ENCODE measurements at regions of chr1 and their contacts with region 1.

Region 1: DNA sequence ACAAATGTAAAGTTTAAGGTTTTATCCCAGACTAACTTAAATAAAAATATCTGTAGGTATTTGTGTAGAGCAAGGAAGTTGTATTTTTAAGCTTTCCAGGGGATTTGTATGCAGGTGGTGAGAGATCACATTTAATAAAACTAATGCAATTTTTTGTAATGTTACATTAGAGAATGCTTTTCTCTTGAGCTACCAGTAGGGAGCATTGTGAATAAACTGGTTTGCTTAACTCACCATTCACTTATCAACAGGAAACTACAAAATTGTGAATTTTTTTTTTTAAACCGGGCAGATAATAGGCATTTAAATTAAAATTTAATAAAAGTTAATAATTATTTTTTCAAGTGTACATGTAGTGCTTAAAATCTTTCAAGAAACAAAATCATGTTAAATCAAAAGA is 78.6 kb downstream of the IVNS1ABP start:
- DNase-seq: no peak
- ATAC-seq: no peak
- H3K4me3 ChIP-seq: no peak overlapping the region
- H3K27ac ChIP-seq: no peak overlapping the region
- H3K4me1 ChIP-seq: no peaks in the 10 kb centered on the region
- H3K27me3 ChIP-seq: no peaks in the 10 kb centered on the region

Region 2: GRCh38 chr1:184973272-184974055 is 265.0 kb before region 1 on chr1:
- intact Hi-C with region 1: no loop called
- DNase-seq: peak; percentile 50 to 81 (median 78)
- ATAC-seq: peak; percentile 58 to 66
- H3K4me3 ChIP-seq: peak overlapping the region; percentile 83
- H3K27ac ChIP-seq: peak overlapping the region; percentile 83
- H3K4me1 ChIP-seq: no peaks in the 10 kb centered on the region
- H3K27me3 ChIP-seq: no peaks in the 10 kb centered on the region

Region 3: GRCh38 chr1:185040408-185040735 is 198.1 kb before region 1 on chr1:
- intact Hi-C with region 1: no loop called
- DNase-seq: no peak
- ATAC-seq: no peak
- H3K4me3 ChIP-seq: no peak overlapping the region
- H3K27ac ChIP-seq: no peak overlapping the region
- H3K4me1 ChIP-seq: no peaks in the 10 kb centered on the region
- H3K27me3 ChIP-seq: no peaks in the 10 kb centered on the region

Region 4: DNA sequence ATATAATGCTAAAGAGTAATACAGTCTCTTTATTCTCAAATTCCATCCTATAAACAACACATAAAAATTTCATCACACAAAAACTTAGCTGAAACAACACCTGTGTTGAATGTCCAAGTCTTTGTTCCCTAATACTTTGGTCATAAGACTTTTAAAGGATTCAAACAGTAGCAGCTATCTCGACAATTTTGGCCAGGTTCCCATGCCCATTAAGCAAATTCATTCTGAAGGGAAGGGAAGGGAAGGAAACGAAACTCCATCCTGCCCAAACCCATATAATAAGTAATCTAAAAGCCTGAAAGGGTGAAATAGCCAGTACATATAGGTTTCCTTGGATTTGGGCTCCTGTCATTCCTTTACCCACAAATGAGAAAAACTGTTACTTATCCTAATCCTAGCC is 71.1 kb after region 1 on chr1:
- intact Hi-C with region 1: no loop called
- DNase-seq: no peak
- ATAC-seq: peak in 1 of 2 donors; percentile 33
- H3K4me3 ChIP-seq: no peak overlapping the region
- H3K27ac ChIP-seq: no peak overlapping the region
- H3K4me1 ChIP-seq: peaks cover 4% of the 10 kb centered on the region
- H3K27me3 ChIP-seq: no peaks in the 10 kb centered on the region

Region 5: DNA sequence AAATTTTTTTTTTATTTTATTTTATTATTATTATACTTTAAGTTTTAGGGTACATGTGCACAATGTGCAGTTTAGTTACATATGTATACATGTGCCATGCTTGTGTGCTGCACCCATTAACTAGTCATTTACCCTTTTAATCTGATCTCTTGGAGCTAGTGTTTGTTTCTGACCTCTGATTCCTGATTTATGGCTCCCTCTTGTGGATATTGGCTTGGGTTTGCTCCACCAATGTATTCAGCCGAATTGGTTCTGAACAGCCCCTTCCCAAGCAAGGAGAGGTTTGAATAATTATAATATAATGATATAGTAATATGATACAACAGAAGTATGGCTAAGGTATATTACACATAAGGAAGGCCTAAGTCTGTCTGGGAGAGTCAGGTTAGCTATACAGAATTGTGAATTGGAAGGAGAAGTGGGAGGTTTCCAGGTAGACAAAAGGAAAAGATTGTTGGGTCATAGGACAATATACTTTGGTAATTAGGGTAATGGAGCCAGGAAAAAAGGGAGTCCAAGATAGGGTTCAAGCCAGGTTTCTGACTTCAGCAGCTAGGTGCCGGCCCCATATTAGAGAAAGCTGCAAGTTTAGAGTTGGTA is 442.7 kb after region 1 on chr1:
- intact Hi-C with region 1: loop called in 3 of 4 experiments (anchors 10 kb)
- DNase-seq: no peak
- ATAC-seq: peak; percentile 52 to 71
- H3K4me3 ChIP-seq: no peak overlapping the region
- H3K27ac ChIP-seq: no peak overlapping the region
- H3K4me1 ChIP-seq: peaks cover 5% of the 10 kb centered on the region
- H3K27me3 ChIP-seq: no peaks in the 10 kb centered on the region